ENCODE measurements at regions of chr6 and their contacts with region 1.

Region 1: GRCh38 chr6:21610341-21610740 is 16.8 kb downstream of the SOX4 start:
- DNase-seq: no peak
- ATAC-seq: no peak
- H3K4me3 ChIP-seq: no peak overlapping the region
- H3K27ac ChIP-seq: no peak overlapping the region
- H3K4me1 ChIP-seq: no peaks in the 10 kb centered on the region
- H3K27me3 ChIP-seq: no peaks in the 10 kb centered on the region

Region 2: DNA sequence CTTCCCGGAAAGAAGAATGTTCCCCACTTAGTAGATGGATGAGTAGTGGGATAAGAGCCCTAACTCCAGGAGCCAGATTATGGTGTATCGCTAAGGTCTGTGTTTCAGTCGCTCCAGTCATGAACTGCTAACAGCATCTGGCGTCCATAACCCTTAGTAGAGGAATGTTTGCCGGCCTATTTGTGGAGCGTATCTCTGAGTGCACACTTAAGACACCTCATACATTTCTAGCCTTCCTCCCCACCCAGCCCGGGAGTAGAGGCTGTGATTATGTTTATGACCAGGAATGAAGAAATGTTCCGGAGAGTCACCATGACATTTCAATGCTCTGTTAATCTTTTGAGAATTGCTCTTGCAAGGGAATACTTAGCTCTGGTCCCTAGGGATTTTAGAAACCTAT is 267.8 kb before region 1 on chr6:
- intact Hi-C with region 1: no loop called
- DNase-seq: no peak
- ATAC-seq: peak; percentile 83 to 86
- H3K4me3 ChIP-seq: no peak overlapping the region
- H3K27ac ChIP-seq: peak overlapping the region; percentile 33
- H3K4me1 ChIP-seq: no peaks in the 10 kb centered on the region
- H3K27me3 ChIP-seq: no peaks in the 10 kb centered on the region

Region 3: DNA sequence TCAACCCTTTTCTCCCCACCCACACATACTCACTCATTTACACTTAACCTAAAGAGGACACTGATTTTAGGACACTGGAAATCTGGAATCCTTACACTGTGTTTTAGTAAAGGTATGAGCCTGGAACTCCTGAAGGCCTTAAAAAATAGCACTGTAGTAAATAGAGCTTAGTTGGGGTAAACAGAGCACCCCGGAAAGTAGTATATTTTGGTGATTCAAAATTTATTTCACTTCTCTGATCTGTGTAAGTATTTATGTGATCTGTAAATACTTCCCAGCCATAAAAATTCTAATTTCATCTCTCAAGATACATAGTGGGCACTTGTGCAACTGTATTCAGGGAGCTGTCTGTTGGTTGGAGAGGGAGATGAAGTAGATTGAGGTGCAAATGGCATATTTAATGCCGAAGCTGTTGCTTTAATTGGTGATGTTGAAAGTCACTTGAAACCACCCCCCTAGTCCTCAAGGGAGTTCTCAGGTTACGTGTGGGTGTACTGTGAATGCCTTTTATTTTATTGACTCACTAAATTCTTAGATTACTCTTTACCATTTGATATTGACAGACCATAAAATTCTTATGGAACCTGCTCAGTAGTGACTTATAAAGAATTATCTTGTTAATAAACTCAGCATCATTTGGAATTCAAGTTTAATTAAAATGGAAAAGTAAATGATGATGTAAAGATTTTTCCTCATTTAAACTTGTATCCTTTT is 138.2 kb after region 1 on chr6:
- intact Hi-C with region 1: loop called in 1 of 4 experiments (anchors 10 kb)
- DNase-seq: no peak
- ATAC-seq: no peak
- H3K4me3 ChIP-seq: no peak overlapping the region
- H3K27ac ChIP-seq: no peak overlapping the region
- H3K4me1 ChIP-seq: peaks cover 2% of the 10 kb centered on the region
- H3K27me3 ChIP-seq: no peaks in the 10 kb centered on the region

Region 4: DNA sequence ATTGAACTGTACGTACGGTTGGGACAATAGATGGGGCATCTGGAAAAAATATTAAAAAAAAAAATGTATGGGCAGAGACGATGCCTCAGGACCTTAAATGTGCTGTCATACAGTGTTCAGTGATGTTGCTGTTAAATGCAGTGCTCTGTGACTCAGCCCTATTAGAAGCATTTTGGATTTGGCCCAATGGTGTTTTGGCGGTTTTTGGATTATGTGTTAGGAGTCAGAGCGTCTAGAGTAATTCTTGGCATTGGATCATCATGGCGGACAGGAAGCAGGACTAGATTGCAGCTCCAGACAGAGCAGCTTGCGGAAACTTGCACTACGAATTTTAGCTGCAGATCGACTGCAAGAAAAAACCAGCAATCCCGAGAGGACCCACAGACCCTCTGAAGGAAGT is 263.2 kb after region 1 on chr6:
- intact Hi-C with region 1: no loop called
- DNase-seq: peak in 1 of 3 donors; percentile 46
- ATAC-seq: peak; percentile 87 to 91
- H3K4me3 ChIP-seq: no peak overlapping the region
- H3K27ac ChIP-seq: no peak overlapping the region
- H3K4me1 ChIP-seq: peaks cover 8% of the 10 kb centered on the region
- H3K27me3 ChIP-seq: no peaks in the 10 kb centered on the region

Measured in right cardiac atrium (tissue), 5 donors.